ENCODE measurements at regions of chr6 and their contacts with region 1.

Region 1: GRCh38 chr6:100099189-100100074 is 105.4 kb upstream of the MCHR2 start:
- DNase-seq: no peak
- H3K4me3 ChIP-seq: no peak overlapping the region
- CTCF ChIP-seq: peak; percentile 31

Region 2: DNA sequence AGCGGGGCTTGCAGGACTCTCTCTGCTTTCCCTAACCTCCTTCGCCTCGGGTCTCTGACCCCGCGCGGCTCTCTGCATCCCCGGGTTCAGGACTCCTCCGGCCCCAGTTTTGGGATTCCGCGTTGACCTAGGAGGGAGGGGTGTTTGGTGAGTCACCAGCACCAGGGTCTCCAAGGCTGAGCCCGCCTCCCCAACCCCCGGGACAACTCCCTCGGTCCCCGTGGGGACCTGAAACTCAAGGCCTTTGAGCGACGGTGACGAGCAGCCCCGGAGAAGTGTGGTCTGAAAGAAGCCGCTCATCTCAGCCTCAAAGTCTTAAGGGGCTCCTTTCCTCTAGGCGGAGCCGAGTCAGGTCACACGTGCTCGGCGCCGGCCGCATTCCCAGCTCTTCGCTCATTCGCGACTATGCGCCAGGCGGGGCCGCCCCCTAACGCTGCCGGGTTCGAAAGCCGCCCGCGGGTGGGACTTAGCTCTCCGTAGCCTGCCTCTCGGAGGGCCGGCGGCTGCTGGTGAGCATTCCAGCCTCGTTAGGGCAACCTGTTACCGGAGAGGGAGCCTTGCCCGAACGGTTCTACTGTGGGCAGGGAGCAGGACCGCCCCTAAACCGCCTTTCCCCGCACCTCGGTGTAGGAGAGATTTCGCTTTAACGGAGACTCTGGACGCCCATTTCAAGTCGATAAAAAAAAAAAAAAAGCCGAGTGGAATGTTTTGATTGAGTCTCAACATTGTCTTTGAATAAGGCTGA is 495.8 kb before region 1 on chr6:
- CTCF ChIA-PET with region 1: no interaction called
- POLR2A ChIA-PET with region 1: no interaction called
- DNase-seq: no peak
- H3K4me3 ChIP-seq: peak overlapping the region; percentile 36
- CTCF ChIP-seq: no peak

Region 3: GRCh38 chr6:99882128-99882702 is 217.2 kb before region 1 on chr6:
- CTCF ChIA-PET with region 1: interaction called, 11 read pairs
- POLR2A ChIA-PET with region 1: no interaction called
- DNase-seq: no peak
- H3K4me3 ChIP-seq: no peak overlapping the region
- CTCF ChIP-seq: no peak

Region 4: GRCh38 chr6:99905209-99906106 is 194.0 kb before region 1 on chr6:
- CTCF ChIA-PET with region 1: interaction called, 21 read pairs
- POLR2A ChIA-PET with region 1: no interaction called
- DNase-seq: peak; percentile 7
- H3K4me3 ChIP-seq: no peak overlapping the region
- CTCF ChIP-seq: peak; percentile 71

Region 5: GRCh38 chr6:99993533-99994251 is 105.7 kb before region 1 on chr6 and contains the start of gene MCHR2:
- CTCF ChIA-PET with region 1: interaction called, 12 read pairs
- POLR2A ChIA-PET with region 1: no interaction called
- DNase-seq: no peak
- H3K4me3 ChIP-seq: peak within 1 kb of the TSS; percentile 29
- CTCF ChIP-seq: no peak

Region 6: GRCh38 chr6:100001915-100002388 is 97.5 kb before region 1 on chr6:
- CTCF ChIA-PET with region 1: interaction called, 256 read pairs
- POLR2A ChIA-PET with region 1: no interaction called
- DNase-seq: peak; percentile 16
- H3K4me3 ChIP-seq: no peak overlapping the region
- CTCF ChIP-seq: peak; percentile 88

Region 7: GRCh38 chr6:100078509-100078908 is 20.9 kb before region 1 on chr6:
- CTCF ChIA-PET with region 1: interaction called, 123 read pairs
- POLR2A ChIA-PET with region 1: no interaction called
- DNase-seq: no peak
- H3K4me3 ChIP-seq: no peak overlapping the region
- CTCF ChIP-seq: peak; percentile 43

Region 8: GRCh38 chr6:100088009-100088408 is 11.4 kb before region 1 on chr6:
- CTCF ChIA-PET with region 1: interaction called, 123 read pairs
- POLR2A ChIA-PET with region 1: no interaction called
- DNase-seq: peak; percentile 65
- H3K4me3 ChIP-seq: no peak overlapping the region
- CTCF ChIP-seq: no peak

Region 9: DNA sequence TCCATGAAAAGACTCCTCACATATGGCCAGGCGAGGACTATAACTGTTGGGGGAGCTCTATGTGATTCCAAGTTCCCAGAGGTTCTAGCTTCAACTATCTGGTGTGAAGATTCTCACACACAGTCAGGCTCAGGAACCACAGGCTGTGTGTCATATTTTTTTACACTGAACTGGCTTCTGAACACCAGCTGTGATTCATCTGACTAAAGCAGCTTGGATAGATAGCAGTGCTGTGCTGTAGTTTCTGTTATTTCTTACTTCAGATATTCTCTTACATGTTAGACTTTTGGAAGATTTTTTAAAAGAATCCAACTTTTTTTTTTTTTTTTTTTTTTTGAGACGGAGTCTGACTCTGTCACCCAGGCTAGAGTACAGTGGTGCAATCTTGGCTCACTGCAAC is 35.3 kb after region 1 on chr6:
- CTCF ChIA-PET with region 1: no interaction called
- POLR2A ChIA-PET with region 1: no interaction called
- DNase-seq: no peak
- H3K4me3 ChIP-seq: no peak overlapping the region
- CTCF ChIP-seq: no peak